Lower leg skin (tissue), 4 donors: ENCODE measurements at regions of chr11 and their contacts with region 1.

Region 1: DNA sequence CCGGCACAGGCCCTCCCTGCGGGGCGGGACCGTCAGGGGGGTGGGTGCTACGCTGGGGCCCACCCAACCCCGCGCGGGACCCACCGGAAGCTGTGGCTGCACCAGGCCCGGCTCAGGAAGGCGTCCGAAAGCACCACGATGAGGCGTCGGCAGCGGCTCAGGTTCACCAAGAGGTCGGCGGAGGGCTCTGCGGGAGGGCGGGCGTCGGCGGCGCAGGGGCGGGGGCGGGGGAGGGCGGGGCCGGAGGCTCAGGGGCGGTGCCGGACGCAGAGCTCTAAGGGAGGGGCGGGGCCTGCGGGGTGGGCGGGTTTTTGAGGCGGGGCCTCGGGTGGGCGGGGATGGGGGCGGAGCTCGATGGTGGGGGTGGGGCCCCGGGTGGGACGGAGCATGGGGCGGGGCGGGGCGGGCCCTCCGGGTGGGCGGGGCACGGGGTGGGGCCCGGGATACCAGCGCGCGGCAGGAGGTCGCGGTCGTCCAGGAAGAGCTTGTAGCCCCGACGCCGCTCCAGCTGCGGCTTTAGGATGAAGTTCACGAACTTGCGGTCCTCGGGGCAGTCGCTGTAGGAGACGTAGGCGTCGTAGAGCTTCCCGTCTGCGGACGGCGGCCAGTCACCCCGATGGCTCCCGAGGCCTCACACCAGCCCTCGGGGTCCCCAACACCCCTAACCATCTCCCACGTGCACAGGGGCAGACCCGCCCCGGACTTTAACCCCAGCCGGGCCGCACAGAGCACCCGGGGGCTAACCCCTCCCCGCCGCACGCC is 7.6 kb downstream of the SIGIRR start:
- DNase-seq: peak; percentile 77 to 95
- H3K4me3 ChIP-seq: peak overlapping the region; percentile 23
- CTCF ChIP-seq: no peak
- POLR2A ChIP-seq: no peak

Region 2: DNA sequence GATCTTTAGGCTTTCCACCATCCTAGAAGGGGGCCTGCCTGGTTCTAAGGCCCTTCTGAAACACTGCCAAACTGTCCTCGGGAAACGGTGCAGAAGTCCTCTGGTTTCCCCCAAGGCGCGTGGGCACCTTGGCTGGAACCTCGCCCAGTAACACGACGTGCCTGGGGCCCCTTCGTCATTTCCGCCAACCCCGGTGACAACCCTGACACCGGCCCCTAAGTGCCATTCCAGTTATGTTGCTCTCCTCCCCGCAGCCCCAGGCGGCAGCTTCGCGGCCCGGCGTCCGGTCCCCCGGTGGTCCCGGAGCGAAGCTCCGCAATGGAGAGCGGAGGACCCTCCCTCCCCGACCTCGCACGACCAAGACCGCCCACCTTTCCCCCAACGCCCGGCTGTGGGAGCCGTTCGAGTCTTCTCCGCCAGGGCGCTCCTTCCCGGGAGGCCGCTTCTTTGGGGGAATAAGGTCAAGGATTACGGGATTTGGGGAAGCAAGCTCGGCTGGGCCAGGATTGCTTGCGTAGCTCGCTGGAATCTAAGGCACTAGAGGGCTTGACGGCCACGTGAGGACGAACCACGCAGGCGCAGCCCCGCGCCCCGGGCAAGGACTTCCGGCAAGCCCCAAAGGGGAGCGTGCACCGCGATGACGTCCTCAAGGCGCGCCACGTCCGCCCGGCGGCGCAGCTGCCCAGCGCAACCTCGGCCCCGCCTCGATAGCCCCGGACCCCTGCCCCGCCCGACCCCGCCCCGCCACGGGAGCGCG is 99.3 kb after region 1 on chr11:
- intact Hi-C with region 1: loop called (anchors 10 kb)
- DNase-seq: peak; percentile 96 to 100
- H3K4me3 ChIP-seq: peak overlapping the region; percentile 77
- CTCF ChIP-seq: no peak
- POLR2A ChIP-seq: peak in 1 of 2 donors; percentile 20